Endothelial cell of umbilical vein (primary cell): ENCODE measurements at regions of chr10 and their contacts with region 1.

Region 1: DNA sequence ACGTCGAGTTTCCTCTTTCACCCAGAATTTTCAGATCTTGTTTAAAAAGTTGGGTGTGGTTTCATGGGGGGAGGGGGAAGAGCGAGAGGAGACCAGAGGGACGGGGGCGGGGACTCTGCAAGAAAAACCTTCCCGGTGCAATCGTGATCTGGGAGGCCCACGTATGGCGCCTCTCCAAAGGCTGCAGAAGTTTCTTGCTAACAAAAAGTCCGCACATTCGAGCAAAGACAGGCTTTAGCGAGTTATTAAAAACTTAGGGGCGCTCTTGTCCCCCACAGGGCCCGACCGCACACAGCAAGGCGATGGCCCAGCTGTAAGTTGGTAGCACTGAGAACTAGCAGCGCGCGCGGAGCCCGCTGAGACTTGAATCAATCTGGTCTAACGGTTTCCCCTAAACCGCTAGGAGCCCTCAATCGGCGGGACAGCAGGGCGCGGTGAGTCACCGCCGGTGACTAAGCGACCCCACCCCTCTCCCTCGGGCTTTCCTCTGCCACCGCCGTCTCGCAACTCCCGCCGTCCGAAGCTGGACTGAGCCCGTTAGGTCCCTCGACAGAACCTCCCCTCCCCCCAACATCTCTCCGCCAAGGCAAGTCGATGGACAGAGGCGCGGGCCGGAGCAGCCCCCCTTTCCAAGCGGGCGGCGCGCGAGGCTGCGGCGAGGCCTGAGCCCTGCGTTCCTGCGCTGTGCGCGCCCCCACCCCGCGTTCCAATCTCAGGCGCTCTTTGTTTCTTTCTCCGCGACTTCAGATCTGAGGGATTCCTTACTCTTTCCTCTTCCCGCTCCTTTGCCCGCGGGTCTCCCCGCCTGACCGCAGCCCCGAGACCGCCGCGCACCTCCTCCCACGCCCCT is at the start of gene VIM:
- DNase-seq: peak; percentile 97
- H3K4me3 ChIP-seq: peak within 1 kb of the TSS; percentile 66 to 87 (median 83)
- H3K27ac ChIP-seq: peak within 1 kb of the TSS; percentile 99
- H3K4me1 ChIP-seq: peaks cover 24% of the 10 kb centered on the region
- H3K27me3 ChIP-seq: no peaks in the 10 kb centered on the region
- CTCF ChIP-seq: peak in 1 of 2 donors; percentile 16
- POLR2A ChIP-seq: peak; percentile 92
- total RNA-seq, gene VIM: 5,754 and 5,781 TPM in 2 replicates

Region 2: GRCh38 chr10:16853201-16853600 is 375.1 kb before region 1 on chr10:
- CTCF ChIA-PET with region 1: interaction called, 14 read pairs
- POLR2A ChIA-PET with region 1: interaction called, 7 read pairs
- dilution Hi-C with region 1: no loop called
- intact Hi-C with region 1: no loop called
- DNase-seq: peak; percentile 73
- H3K4me3 ChIP-seq: no peak overlapping the region
- H3K27ac ChIP-seq: no peak overlapping the region
- H3K4me1 ChIP-seq: peaks cover 23% of the 10 kb centered on the region
- H3K27me3 ChIP-seq: no peaks in the 10 kb centered on the region
- CTCF ChIP-seq: peak; percentile 35 to 39
- POLR2A ChIP-seq: no peak

Region 3: DNA sequence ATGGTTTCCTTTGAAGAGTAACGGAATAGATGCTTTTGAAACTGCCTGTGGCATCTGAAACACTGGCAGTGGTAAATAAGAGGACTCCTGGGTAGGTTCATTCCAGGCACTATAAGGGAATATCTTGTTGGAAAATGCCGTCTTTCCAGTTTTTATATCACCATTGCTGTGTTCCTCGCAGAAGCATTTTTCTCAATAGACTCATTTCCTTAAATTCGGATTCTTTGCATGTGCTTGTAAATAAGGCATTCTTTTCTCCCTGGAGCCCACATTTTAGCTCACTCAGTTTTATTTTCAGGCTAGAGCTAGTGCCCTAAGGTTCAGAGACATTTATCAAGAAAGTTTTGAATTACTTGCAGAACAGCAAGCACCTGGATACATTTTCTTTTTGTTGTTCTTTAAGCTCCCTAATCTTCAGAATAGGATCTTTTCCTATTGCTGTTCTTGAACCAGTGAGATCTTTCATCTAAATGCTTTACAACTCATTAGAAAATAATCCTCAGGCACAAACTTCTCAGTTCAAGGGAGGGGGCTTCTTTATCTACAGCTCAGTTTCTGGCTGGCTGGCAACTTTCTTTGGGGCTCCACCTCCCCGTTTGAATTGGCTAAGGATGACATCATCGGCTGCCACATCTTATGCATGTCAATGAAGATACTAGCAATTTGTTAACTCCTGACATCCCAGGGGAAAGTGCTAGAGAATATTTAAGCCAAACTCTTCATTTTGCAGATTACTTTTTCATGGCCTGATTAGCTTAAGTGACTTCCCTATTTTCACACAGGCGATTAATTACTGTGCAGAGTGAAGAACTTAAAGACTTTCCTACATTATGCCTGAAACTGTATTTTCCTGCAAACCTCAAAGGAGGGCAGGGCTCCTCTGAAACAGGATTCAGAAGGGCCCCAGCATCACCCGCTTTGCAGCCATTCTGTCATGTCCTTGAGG is 277.4 kb before region 1 on chr10:
- CTCF ChIA-PET with region 1: no interaction called
- POLR2A ChIA-PET with region 1: interaction called, 3 read pairs
- dilution Hi-C with region 1: no loop called
- intact Hi-C with region 1: loop called (anchors 1 kb)
- DNase-seq: peak; percentile 89
- H3K4me3 ChIP-seq: no peak overlapping the region
- H3K27ac ChIP-seq: peak overlapping the region; percentile 66
- H3K4me1 ChIP-seq: peaks cover 40% of the 10 kb centered on the region
- H3K27me3 ChIP-seq: no peaks in the 10 kb centered on the region
- CTCF ChIP-seq: no peak
- POLR2A ChIP-seq: no peak

Region 4: DNA sequence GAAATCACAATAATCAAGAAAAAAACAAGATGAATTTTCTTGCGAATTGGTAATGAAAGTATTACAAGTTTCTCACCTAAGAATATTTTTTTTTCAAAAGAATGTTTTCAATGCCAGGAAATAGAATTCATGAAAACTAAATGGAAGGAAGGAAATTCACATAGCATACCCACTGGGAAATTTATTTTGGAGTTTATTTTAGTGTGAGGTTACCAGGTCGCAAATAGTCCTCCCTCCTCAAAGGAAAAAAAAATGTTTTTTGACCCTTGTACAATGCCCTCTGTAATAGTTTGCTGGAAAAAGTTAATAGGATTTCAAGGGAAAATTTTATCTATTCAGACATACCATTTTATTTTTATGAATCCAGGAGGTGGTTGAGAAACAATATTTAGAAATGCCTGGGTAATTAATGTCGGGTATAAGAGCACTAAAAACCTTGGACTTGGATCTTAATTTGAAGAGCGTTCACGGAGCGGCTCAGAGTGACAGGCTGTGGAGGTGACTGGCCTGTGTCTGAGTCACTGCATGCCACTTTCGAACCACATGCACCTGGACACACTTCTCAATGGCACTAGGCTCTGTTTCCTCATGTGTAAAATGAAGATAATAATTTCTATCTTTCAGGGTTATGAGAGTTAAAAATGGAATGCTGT is 126.9 kb before region 1 on chr10:
- CTCF ChIA-PET with region 1: no interaction called
- POLR2A ChIA-PET with region 1: no interaction called
- dilution Hi-C with region 1: no loop called
- intact Hi-C with region 1: loop called (anchors 1 kb)
- DNase-seq: peak; percentile 70
- H3K4me3 ChIP-seq: no peak overlapping the region
- H3K27ac ChIP-seq: peak overlapping the region; percentile 65
- H3K4me1 ChIP-seq: peaks cover 16% of the 10 kb centered on the region
- H3K27me3 ChIP-seq: no peaks in the 10 kb centered on the region
- CTCF ChIP-seq: no peak
- POLR2A ChIP-seq: no peak

Region 5: GRCh38 chr10:17200912-17201793 is 27.2 kb before region 1 on chr10 and contains the start of gene TRDMT1:
- CTCF ChIA-PET with region 1: interaction called, 46 read pairs
- POLR2A ChIA-PET with region 1: interaction called, 33 read pairs
- dilution Hi-C with region 1: no loop called
- intact Hi-C with region 1: loop called (anchors 1 kb)
- DNase-seq: peak; percentile 91
- H3K4me3 ChIP-seq: peak within 1 kb of the TSS; percentile 69 to 95 (median 91)
- H3K27ac ChIP-seq: peak within 1 kb of the TSS; percentile 100
- H3K4me1 ChIP-seq: peaks cover 28% of the 10 kb centered on the region
- H3K27me3 ChIP-seq: no peaks in the 10 kb centered on the region
- CTCF ChIP-seq: no peak
- POLR2A ChIP-seq: peak; percentile 86
- total RNA-seq, gene TRDMT1: 12.3 and 15.2 TPM in 2 replicates